Activated T-helper 2 cell treated with anti-CD3 and anti-CD28 coated beads, Interferon-gamma antibody, Interleukin-2, Interleukin-4, amounts not matched to agents 10 μg/mL and 5 μg/mL and 100 μg/mL, durations not matched to agents 14 hours and 24 hours and 36 hours (primary cell): ENCODE measurements at regions of chr9 and their contacts with region 1.

Region 1: DNA sequence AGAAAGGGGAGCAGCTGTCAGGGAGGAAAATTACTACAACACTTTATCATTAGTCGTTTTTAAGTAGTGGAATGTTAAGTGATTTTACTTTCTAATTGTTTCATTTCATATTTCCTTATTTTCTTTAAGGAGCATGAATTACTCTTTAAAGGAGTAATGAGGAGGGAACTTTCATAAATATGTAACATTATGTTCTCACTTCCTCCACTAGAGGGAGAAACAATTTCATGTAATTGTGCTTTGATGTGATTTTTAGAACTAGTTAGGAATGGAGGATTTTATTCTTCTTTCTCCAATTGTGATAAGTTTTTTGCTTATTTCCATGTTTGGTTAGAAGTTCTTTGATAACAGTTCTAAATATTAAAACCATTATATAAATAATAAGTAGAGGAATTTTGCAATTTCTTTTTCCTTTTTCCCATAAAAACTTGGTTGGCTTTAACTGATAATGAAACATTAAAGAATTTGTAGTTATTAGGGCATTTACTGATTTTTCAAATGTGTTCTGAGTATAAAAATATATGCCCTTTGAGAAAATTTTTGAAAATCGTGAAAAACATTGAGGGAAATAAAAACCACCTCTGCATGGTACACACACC is 25.6 kb downstream of the CEP78 start:
- DNase-seq: no peak
- H3K4me3 Mint-ChIP-seq: no peak overlapping the region
- H3K27ac Mint-ChIP-seq: no peak overlapping the region
- H3K4me1 Mint-ChIP-seq: no peaks in the 10 kb centered on the region
- H3K27me3 Mint-ChIP-seq: no peaks in the 10 kb centered on the region

Region 2: DNA sequence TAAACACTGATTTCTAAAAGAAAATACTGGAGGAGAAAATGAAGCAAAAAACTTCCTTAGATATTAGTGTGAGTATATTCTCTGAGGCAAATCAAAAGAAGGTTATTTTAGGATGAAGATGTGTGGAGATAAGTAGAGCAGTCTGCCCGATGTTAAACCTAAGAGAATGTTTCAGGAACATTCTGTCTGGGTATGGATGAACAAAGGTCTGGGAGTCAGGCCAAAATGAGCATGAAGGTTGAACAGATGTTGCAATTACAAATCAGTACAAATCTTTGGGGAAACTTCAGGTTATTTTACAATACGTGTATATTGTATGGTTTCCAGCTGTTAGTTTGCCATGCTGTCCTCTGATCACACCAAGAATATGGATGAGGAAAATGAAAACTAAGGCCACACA is 40.1 kb before region 1 on chr9:
- intact Hi-C with region 1: no loop called
- DNase-seq: no peak
- H3K4me3 Mint-ChIP-seq: no peak overlapping the region
- H3K27ac Mint-ChIP-seq: no peak overlapping the region
- H3K4me1 Mint-ChIP-seq: no peaks in the 10 kb centered on the region
- H3K27me3 Mint-ChIP-seq: peaks cover 13% of the 10 kb centered on the region

Region 3: DNA sequence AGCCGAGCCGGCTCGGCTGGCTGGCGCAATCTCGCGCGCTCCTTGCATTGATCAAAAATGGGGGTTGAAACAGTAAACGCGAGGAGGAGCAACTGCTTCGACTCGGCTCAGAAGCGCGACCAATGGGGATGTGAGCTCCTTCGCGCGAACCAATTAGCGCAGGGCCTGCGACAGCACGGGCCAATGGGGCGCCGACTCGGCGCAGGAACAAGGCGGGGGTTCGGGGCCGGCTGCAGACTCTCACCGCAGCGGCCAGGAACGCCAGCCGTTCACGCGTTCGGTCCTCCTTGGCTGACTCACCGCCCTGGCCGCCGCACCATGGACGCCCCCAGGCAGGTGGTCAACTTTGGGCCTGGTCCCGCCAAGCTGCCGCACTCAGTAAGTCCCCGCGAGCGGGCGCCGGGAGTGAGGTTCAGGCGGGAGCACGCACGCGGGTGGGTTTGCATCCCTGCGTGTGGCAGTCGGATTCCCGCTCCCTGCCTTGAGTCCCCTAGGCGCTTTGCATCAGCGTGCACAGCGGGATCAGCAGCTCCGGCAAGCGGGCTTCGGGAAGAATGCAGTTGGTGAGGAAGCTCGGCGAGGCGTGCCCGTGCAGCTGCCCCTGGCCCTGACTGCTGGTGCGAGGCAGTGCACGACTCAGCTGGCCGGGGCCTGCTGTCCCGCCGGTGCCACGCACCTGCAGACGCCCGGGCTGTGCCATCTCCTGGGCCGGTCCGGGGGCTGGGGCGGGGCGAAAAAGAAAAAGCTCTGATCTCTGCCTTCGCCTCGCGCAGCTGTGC is 35.6 kb after region 1 on chr9 and contains the start of gene PSAT1:
- intact Hi-C with region 1: loop called (anchors 5 kb)
- DNase-seq: peak; percentile 92
- H3K4me3 Mint-ChIP-seq: peak within 1 kb of the TSS; percentile 92
- H3K27ac Mint-ChIP-seq: peak within 1 kb of the TSS; percentile 93
- H3K4me1 Mint-ChIP-seq: peaks cover 40% of the 10 kb centered on the region
- H3K27me3 Mint-ChIP-seq: no peaks in the 10 kb centered on the region
- total RNA-seq, gene PSAT1: 66.5 and 67.6 TPM in 2 replicates

Region 4: GRCh38 chr9:78369639-78370219 is 108.2 kb after region 1 on chr9:
- intact Hi-C with region 1: loop called (anchors 1 kb)
- DNase-seq: peak; percentile 22
- H3K4me3 Mint-ChIP-seq: no peak overlapping the region
- H3K27ac Mint-ChIP-seq: no peak overlapping the region
- H3K4me1 Mint-ChIP-seq: peaks cover 4% of the 10 kb centered on the region
- H3K27me3 Mint-ChIP-seq: peaks cover 12% of the 10 kb centered on the region